MCF 10A (cell line): ENCODE measurements at regions of chr10 and their contacts with region 1.

Region 1: GRCh38 chr10:60208676-60209269 is 180.9 kb downstream of the ANK3 start:
- DNase-seq: peak; percentile 59
- H3K4me3 Mint-ChIP-seq: no peak overlapping the region
- H3K27ac Mint-ChIP-seq: no peak overlapping the region
- H3K4me1 Mint-ChIP-seq: peaks cover 6% of the 10 kb centered on the region
- H3K27me3 Mint-ChIP-seq: no peaks in the 10 kb centered on the region
- CTCF ChIP-seq: peak; percentile 75

Region 2: DNA sequence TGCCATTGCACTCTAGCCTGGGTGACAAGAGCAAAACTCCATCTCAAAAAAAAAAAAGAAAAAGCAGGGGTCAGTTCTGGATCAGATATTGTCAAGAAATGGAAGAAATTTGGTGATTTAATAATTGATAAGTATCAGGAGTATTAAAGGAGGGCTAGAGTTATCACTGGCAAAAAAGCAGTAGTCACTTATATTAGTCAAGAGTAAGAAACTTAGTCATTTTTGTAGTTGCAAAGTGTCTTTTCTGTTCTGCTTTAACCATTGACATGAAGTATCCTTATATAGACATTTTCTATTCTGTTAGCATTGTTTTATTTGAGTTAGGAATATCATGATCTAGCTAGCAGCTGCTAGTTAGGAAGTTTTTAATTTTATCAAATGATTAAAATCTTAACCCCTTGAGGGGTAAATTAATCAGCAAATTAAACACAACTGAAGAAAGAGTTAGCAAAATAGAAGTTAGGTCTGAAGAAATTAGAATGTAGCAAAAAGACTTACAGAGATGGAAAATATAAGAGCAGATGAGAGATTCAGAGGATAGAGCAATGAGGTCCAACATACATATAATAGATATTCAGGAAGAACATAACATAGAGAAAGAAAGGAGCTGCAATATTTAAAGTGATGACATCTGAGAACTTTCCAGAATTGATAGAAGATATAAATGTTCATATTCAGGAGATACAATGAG is 295.1 kb before region 1 on chr10:
- CTCF ChIA-PET with region 1: interaction called, 10 read pairs
- POLR2A ChIA-PET with region 1: no interaction called
- intact Hi-C with region 1: loop called (anchors 1 kb)
- DNase-seq: no peak
- H3K4me3 Mint-ChIP-seq: no peak overlapping the region
- H3K27ac Mint-ChIP-seq: no peak overlapping the region
- H3K4me1 Mint-ChIP-seq: peaks cover 1% of the 10 kb centered on the region
- H3K27me3 Mint-ChIP-seq: no peaks in the 10 kb centered on the region
- CTCF ChIP-seq: no peak

Region 3: DNA sequence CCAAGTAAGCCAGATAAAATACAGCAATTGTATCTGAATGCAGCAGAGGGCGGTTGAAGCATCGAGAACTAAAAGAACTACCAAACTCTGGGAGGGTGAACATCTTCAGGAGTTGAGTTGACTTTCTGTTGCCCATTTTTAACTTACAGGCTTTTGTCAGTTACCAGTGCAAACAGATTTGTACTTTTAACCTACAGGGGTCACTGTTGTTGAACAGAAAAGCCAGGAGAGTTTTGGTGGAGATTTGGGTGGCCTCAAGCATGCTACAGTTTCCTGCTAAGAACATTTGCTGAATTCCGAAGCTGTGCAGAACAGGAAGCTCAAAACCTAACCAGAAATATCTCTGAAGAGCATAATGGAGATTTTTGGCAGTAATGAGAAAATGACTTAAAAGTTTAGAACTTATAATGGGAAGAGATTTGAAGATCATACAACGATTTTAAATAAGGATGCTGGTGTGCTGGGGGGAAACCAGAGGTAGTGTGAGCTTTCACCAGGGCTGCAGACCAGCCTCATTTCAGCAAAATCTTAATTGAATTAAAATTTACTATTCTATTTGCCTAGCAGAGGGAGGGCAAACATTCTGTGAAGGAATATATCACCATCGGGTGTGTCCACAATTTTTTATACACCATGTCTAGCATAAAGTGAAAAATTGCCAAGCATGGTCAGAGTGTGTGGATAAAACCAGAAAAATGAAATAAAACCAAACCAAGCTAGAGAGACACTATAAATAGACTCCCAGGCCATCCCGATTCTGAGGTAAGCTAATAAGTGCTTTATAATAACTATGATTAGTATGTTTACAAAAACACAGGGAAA is 93.8 kb before region 1 on chr10:
- CTCF ChIA-PET with region 1: interaction called, 257 read pairs
- POLR2A ChIA-PET with region 1: interaction called, 7 read pairs
- intact Hi-C with region 1: loop called (anchors 1 kb)
- DNase-seq: peak; percentile 70
- H3K4me3 Mint-ChIP-seq: no peak overlapping the region
- H3K27ac Mint-ChIP-seq: no peak overlapping the region
- H3K4me1 Mint-ChIP-seq: no peaks in the 10 kb centered on the region
- H3K27me3 Mint-ChIP-seq: no peaks in the 10 kb centered on the region
- CTCF ChIP-seq: peak; percentile 57

Region 4: GRCh38 chr10:60197206-60197605 is 11.6 kb before region 1 on chr10:
- CTCF ChIA-PET with region 1: interaction called, 11 read pairs
- POLR2A ChIA-PET with region 1: no interaction called
- intact Hi-C with region 1: no loop called
- DNase-seq: no peak
- H3K4me3 Mint-ChIP-seq: no peak overlapping the region
- H3K27ac Mint-ChIP-seq: no peak overlapping the region
- H3K4me1 Mint-ChIP-seq: no peaks in the 10 kb centered on the region
- H3K27me3 Mint-ChIP-seq: no peaks in the 10 kb centered on the region
- CTCF ChIP-seq: no peak

Region 5: DNA sequence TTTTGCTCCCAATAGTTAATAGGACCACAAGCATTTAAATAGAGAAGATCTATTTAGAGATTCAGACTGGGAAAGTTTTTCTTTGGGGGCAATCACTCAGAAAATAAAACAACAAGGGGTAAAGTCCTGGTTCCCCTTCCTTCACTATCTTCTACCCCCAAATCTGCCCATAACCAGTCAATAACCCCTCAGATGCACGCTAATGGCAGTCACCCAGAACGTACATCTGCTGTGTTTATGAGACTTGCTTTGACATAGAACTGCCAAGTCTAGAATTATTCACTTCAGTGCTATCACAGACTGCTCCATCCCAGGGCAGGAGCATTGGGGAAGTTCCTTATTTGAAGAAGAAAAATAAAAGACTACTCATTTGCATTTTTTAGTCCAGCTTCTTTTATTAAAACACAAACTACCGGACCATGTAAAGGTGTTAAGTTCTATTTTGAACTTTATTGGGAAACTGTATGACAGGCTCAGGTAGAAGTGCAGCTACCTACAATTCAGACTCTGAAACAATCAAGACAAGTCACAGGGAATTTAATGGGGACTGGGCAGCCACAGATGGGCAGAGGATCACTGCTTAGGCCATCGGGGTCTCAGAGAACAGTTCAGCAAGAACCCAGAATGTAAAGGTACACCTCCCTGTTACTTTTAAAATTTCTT is 142.5 kb after region 1 on chr10:
- CTCF ChIA-PET with region 1: no interaction called
- POLR2A ChIA-PET with region 1: no interaction called
- intact Hi-C with region 1: no loop called
- DNase-seq: no peak
- H3K4me3 Mint-ChIP-seq: no peak overlapping the region
- H3K27ac Mint-ChIP-seq: no peak overlapping the region
- H3K4me1 Mint-ChIP-seq: no peaks in the 10 kb centered on the region
- H3K27me3 Mint-ChIP-seq: no peaks in the 10 kb centered on the region
- CTCF ChIP-seq: no peak

Region 6: DNA sequence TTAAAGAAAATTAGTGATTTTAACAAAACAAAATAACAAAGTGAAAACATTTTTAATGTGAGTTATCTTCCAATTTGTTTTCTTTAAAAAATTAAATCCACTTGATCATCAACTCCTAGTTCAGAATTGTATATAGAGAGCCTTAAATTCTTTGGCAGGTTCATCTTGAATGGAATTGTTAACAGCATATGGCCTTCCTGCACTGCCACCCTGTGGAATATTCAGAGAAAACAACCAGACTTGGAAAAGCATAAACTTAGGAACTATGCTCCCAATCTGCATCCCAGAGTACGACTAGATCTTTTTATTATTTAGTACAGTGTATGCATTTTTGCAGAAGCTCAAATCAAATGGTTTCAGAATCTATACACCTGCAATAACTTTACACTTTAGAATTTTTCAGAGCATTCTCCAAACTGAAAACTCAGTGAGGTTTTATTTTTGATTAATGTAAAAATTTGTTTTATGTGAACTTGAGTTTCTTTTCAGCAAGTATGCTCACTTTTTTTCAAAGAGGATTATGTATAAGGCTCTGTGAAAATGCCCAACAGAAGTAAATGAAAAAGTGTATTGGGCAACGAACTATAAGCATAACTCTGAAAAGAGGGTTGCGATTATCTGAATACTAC is 225.8 kb after region 1 on chr10:
- CTCF ChIA-PET with region 1: interaction called, 17 read pairs
- POLR2A ChIA-PET with region 1: no interaction called
- intact Hi-C with region 1: loop called (anchors 1 kb)
- DNase-seq: peak; percentile 69
- H3K4me3 Mint-ChIP-seq: no peak overlapping the region
- H3K27ac Mint-ChIP-seq: no peak overlapping the region
- H3K4me1 Mint-ChIP-seq: peaks cover 20% of the 10 kb centered on the region
- H3K27me3 Mint-ChIP-seq: no peaks in the 10 kb centered on the region
- CTCF ChIP-seq: peak; percentile 68

Region 7: DNA sequence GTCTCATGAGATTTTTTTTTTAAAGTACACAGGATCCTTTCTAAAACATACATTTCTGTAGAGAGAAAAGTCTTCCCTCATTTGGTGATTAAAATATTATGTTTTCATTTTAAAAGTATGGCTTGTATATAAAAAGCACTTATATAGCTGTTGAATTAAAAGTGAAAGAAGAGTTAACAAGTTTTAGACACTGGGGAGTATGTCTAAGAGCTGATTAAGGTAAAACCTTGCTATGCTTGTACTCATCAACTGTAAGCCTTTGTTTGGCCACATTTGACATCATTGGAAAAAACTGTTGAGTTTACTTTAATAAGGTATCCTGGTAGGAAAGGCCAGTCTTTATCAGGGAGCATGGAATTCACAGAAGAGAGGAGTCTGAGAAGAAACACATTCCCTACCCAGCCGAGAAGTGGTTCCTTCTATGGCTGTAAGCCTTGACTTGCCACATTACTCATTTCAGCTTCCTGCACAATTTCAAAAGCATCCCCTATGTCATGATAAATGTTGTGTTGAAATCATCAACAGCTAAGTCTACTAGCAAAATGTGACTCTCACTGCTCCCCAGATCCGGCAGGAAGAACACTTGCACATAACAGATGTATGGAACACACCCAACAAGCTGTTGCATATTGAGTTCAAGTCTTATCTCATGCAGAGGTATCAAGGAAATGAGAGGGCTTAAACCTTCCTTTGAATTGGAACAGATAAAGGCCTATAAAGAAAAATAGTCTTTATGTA is 397.7 kb after region 1 on chr10:
- CTCF ChIA-PET with region 1: no interaction called
- POLR2A ChIA-PET with region 1: no interaction called
- intact Hi-C with region 1: no loop called
- DNase-seq: peak; percentile 79
- H3K4me3 Mint-ChIP-seq: no peak overlapping the region
- H3K27ac Mint-ChIP-seq: peak overlapping the region; percentile 59
- H3K4me1 Mint-ChIP-seq: peaks cover 15% of the 10 kb centered on the region
- H3K27me3 Mint-ChIP-seq: no peaks in the 10 kb centered on the region
- CTCF ChIP-seq: no peak